Right cardiac atrium (tissue), 5 donors: ENCODE measurements at regions of chr10 and their contacts with region 1.

Region 1: GRCh38 chr10:61284222-61284890 is 168.8 kb downstream of the TMEM26 start:
- DNase-seq: no peak
- ATAC-seq: peak in 1 of 2 donors; percentile 37
- H3K4me3 ChIP-seq: no peak overlapping the region
- H3K27ac ChIP-seq: no peak overlapping the region
- H3K4me1 ChIP-seq: no peaks in the 10 kb centered on the region
- H3K27me3 ChIP-seq: no peaks in the 10 kb centered on the region

Region 2: GRCh38 chr10:60810809-60811182 is 473.6 kb before region 1 on chr10:
- intact Hi-C with region 1: loop called (anchors 5 kb)
- DNase-seq: no peak
- ATAC-seq: peak; percentile 92 to 94
- H3K4me3 ChIP-seq: no peak overlapping the region
- H3K27ac ChIP-seq: peak overlapping the region; percentile 51
- H3K4me1 ChIP-seq: peaks cover 2% of the 10 kb centered on the region
- H3K27me3 ChIP-seq: no peaks in the 10 kb centered on the region

Region 3: GRCh38 chr10:60816628-60817397 is 467.5 kb before region 1 on chr10:
- intact Hi-C with region 1: loop called (anchors 5 kb)
- DNase-seq: no peak
- ATAC-seq: peak; percentile 92 to 94
- H3K4me3 ChIP-seq: no peak overlapping the region
- H3K27ac ChIP-seq: no peak overlapping the region
- H3K4me1 ChIP-seq: peaks cover 2% of the 10 kb centered on the region
- H3K27me3 ChIP-seq: no peaks in the 10 kb centered on the region

Region 4: DNA sequence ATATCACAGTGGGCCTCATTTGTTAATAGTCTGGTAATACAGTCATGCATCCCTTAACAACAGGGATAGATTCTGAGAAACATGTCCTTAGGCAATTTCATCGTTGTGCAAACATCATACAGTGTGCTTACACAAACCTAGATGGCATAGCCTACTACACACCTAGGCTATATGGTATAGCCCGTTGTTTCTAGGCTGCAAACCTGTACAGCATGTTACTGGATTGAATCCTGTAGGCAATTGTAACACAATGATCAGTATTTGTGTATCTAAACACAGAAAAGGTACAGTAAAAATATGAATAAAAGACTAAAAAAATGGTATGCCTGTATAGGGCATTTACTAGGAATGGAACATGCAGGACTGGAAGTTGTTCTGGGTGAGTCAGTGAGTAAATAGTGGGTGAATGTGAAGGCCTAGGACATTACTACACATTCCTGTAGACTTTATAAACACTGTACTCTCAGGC is 328.4 kb before region 1 on chr10:
- intact Hi-C with region 1: loop called in 3 of 4 experiments (anchors 10 kb)
- DNase-seq: no peak
- ATAC-seq: no peak
- H3K4me3 ChIP-seq: no peak overlapping the region
- H3K27ac ChIP-seq: no peak overlapping the region
- H3K4me1 ChIP-seq: no peaks in the 10 kb centered on the region
- H3K27me3 ChIP-seq: no peaks in the 10 kb centered on the region

Region 5: DNA sequence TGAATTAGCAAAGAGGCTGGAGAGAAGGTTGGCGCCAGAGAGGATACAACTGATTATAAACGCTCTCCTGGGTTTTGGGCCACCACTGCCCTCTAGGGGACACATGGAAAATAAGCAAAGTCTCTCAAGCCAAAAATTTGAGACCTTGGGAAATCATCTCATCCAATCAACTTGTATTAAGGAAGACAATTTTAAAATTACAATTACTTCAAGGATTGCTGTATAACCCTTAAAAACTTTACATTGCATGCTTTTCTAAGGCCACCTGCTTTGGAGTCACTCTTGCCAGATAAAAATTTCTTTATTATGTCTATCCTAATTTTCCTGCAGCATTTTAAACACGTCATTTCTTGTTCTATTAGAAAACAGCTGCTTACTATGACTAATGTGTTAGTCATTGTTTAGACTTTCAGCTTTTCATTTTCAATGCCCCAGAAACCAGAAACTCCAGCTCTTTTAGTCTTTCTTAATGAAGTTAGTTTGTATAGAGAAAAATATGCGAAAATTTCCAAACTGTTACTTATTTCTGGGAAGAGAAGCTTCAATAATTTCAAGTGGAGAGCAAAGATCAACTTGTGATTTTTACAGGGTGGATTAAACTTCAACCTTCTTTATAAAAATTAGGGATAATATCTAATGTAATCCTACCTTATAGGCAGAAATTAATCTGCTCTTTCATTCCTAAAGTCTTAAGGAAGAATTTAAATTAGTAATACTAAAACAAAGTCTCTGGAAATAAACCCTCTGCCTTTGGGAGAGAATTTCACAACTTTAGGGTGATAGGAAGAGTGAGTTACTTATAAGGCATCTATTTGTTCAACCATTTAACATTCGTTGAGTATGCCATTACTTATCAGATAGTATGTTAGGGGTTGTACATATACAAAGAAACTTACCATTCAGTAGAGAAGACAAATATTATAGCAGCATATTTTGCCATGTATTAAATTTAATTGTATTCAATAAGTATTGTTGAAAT is 319.8 kb before region 1 on chr10:
- intact Hi-C with region 1: loop called in 3 of 4 experiments (anchors 10 kb)
- DNase-seq: peak; percentile 49 to 75 (median 71)
- ATAC-seq: peak; percentile 89 to 90
- H3K4me3 ChIP-seq: no peak overlapping the region
- H3K27ac ChIP-seq: no peak overlapping the region
- H3K4me1 ChIP-seq: no peaks in the 10 kb centered on the region
- H3K27me3 ChIP-seq: no peaks in the 10 kb centered on the region

Region 6: GRCh38 chr10:61135276-61135721 is 149.1 kb before region 1 on chr10:
- intact Hi-C with region 1: loop called (anchors 5 to 10 kb)
- DNase-seq: no peak
- ATAC-seq: no peak
- H3K4me3 ChIP-seq: no peak overlapping the region
- H3K27ac ChIP-seq: no peak overlapping the region
- H3K4me1 ChIP-seq: no peaks in the 10 kb centered on the region
- H3K27me3 ChIP-seq: no peaks in the 10 kb centered on the region

Region 7: DNA sequence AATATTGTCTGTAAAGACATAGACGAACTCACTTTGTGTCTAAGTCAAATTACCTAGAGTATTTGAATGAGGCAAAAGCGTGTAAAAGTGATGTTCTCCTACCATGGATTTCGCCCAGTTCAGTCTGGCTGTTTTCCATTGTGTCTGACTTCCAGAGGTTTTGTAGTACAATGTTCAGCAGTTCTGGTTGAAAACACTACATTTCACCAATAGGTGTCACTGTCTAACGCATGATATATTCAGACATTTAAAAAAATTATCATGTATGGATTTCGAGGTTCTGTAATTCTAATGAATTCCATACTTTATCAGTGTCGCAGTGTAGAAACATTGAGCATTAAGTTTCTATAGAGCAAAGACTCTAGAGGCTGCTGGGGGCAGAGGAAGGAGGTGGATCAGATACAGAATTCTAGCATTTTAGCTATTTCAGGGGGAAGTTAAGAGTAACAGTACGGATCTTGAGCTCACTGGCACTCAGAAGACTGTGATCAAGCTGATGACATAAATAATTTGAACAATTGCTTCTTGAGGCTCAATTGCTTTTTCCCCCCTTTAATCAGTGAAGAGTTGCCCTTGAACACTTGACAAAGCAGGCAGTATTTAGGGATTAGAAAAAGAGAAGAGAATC is 143.5 kb before region 1 on chr10:
- intact Hi-C with region 1: loop called (anchors 5 to 10 kb)
- DNase-seq: peak in 2 of 3 donors; percentile 19 to 43
- ATAC-seq: peak in 1 of 2 donors; percentile 67
- H3K4me3 ChIP-seq: no peak overlapping the region
- H3K27ac ChIP-seq: no peak overlapping the region
- H3K4me1 ChIP-seq: no peaks in the 10 kb centered on the region
- H3K27me3 ChIP-seq: no peaks in the 10 kb centered on the region